ENCODE measurements at regions of chr19 and their contacts with region 1.

Region 1: GRCh38 chr19:5809469-5809868 is 4.6 kb downstream of the NRTN start:
- DNase-seq: no peak
- H3K4me3 ChIP-seq: no peak overlapping the region
- H3K27ac ChIP-seq: no peak overlapping the region
- H3K4me1 ChIP-seq: peaks cover 0 to 5% (median 3%) of the 10 kb centered on the region in 4 experiments; a peak in 3 of 7 replicates
- H3K27me3 ChIP-seq: peaks cover 0 to 1% (median 0%) of the 10 kb centered on the region in 4 experiments; a peak in 1 of 7 replicates
- CTCF ChIP-seq: no peak
- EP300 ChIP-seq: no peak
- POLR2A ChIP-seq: no peak
- RAD21 ChIP-seq: no peak

Region 2: GRCh38 chr19:5897189-5897969 is 87.9 kb after region 1 on chr19:
- CTCF ChIA-PET with region 1: interaction called, 43 read pairs
- POLR2A ChIA-PET with region 1: interaction called, 35 read pairs
- DNase-seq: peak in 1 of 2 experiments; percentile 66
- H3K4me3 ChIP-seq: no peak overlapping the region
- H3K27ac ChIP-seq: no peak overlapping the region; the same call in 1 of the 2 replicates
- H3K4me1 ChIP-seq: peaks cover 0 to 2% (median under 1%) of the 10 kb centered on the region in 4 experiments; a peak in 4 of 7 replicates
- H3K27me3 ChIP-seq: peaks cover 0 to 1% (median 0%) of the 10 kb centered on the region in 4 experiments; a peak in 2 of 7 replicates
- CTCF ChIP-seq: peak; percentile 53 to 62 (median 62)
- EP300 ChIP-seq: no peak
- POLR2A ChIP-seq: no peak
- RAD21 ChIP-seq: peak; percentile 43 to 57

Region 3: GRCh38 chr19:5974721-5975387 is 165.4 kb after region 1 on chr19:
- CTCF ChIA-PET with region 1: no interaction called
- POLR2A ChIA-PET with region 1: no interaction called
- DNase-seq: no peak
- H3K4me3 ChIP-seq: no peak overlapping the region
- H3K27ac ChIP-seq: no peak overlapping the region
- H3K4me1 ChIP-seq: peaks cover 0 to 13% (median 7%) of the 10 kb centered on the region in 4 experiments; a peak in 5 of 7 replicates
- H3K27me3 ChIP-seq: no peaks in the 10 kb centered on the region
- CTCF ChIP-seq: no peak
- EP300 ChIP-seq: no peak
- POLR2A ChIP-seq: no peak
- RAD21 ChIP-seq: no peak

Region 4: GRCh38 chr19:6076675-6077463 is 267.4 kb after region 1 on chr19:
- CTCF ChIA-PET with region 1: no interaction called
- POLR2A ChIA-PET with region 1: no interaction called
- DNase-seq: no peak
- H3K4me3 ChIP-seq: no peak overlapping the region
- H3K27ac ChIP-seq: no peak overlapping the region
- H3K4me1 ChIP-seq: no peaks in the 10 kb centered on the region; a peak in 1 of 7 replicates
- H3K27me3 ChIP-seq: no peaks in the 10 kb centered on the region
- CTCF ChIP-seq: no peak
- EP300 ChIP-seq: no peak
- POLR2A ChIP-seq: no peak
- RAD21 ChIP-seq: no peak